ENCODE measurements at regions of chr1 and their contacts with region 1.

Region 1: GRCh38 chr1:169044971-169045370 is 61.5 kb upstream of the ATP1B1 start:
- DNase-seq: no peak
- ATAC-seq: no peak
- H3K4me3 Mint-ChIP-seq: no peak overlapping the region
- H3K27ac Mint-ChIP-seq: peak overlapping the region; percentile 30
- H3K4me1 Mint-ChIP-seq: peaks cover 67% of the 10 kb centered on the region
- H3K27me3 Mint-ChIP-seq: no peaks in the 10 kb centered on the region

Region 2: DNA sequence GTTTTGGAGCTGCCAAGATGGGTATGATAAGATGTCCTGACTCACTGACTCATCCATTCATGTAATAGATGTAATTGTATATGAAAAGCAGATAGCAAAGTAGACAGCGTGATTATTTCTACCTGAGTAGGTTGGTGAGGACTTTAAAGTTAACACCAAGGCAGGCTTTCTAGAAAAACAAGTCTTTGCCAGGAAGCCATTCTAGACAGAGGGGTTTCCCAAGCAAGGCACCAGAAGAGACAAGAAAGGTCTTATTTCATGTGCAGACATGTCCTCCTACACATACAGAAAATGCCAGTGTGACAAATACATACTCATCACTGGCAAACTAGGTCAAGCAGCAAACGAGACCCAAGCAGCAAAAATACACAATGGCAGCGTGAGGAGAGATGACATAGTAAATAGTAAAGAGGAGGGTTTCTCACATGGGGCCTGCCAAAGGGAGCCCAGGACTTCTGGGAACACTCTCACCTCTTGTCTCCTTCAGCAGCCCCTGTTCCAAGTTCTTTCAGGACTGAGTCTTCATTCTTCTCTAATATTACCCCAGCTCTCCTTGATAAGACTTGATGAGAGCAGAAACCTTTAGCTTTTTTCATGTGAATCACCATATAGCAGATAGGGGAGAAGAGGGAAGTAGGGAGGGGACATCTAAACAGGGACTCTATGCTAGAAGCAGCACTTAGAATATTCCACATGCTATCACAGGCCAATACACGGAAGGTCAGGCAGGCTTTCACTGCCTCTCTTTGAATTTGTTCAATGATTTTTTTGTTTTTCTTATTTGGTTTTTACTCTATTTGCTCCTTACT is 53.1 kb before region 1 on chr1:
- CTCF ChIA-PET with region 1: interaction called, 3 read pairs
- POLR2A ChIA-PET with region 1: no interaction called
- intact Hi-C with region 1: loop called in 1 of 2 experiments (anchors 2 kb)
- DNase-seq: peak; percentile 41
- ATAC-seq: peak; percentile 95
- H3K4me3 Mint-ChIP-seq: no peak overlapping the region
- H3K27ac Mint-ChIP-seq: peak overlapping the region; percentile 81
- H3K4me1 Mint-ChIP-seq: peaks cover 18% of the 10 kb centered on the region
- H3K27me3 Mint-ChIP-seq: peaks cover 3% of the 10 kb centered on the region

Region 3: DNA sequence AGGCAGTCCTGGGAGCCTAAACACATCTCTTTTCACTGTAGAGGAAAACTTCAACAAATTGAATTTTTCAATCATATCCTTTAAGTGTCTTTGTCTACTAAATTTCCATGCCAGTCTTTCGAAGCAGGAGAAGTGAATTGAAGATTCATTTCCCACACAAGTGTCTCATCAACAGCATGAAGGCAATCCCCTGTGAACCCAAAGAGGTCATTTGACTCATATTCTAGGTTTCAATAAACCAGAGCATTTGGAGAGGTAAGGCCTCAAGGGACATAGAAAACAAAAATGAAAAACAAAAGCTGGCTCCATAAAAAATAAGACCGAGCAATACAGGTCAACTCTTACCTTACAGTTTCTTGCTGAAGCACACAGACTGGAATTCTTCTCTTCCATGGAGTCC is 32.6 kb before region 1 on chr1:
- CTCF ChIA-PET with region 1: no interaction called
- POLR2A ChIA-PET with region 1: no interaction called
- intact Hi-C with region 1: loop called in 1 of 2 experiments (anchors 1 kb)
- DNase-seq: no peak
- ATAC-seq: peak; percentile 91
- H3K4me3 Mint-ChIP-seq: no peak overlapping the region
- H3K27ac Mint-ChIP-seq: peak overlapping the region; percentile 33
- H3K4me1 Mint-ChIP-seq: peaks cover 13% of the 10 kb centered on the region
- H3K27me3 Mint-ChIP-seq: no peaks in the 10 kb centered on the region

Region 4: GRCh38 chr1:169106095-169106920 is 61.3 kb after region 1 on chr1 and contains the start of gene ATP1B1:
- CTCF ChIA-PET with region 1: interaction called, 3 read pairs
- POLR2A ChIA-PET with region 1: interaction called, 3 read pairs
- intact Hi-C with region 1: loop called (anchors 2 to 5 kb)
- DNase-seq: peak; percentile 88
- ATAC-seq: peak; percentile 91
- H3K4me3 Mint-ChIP-seq: peak within 1 kb of the TSS; percentile 78
- H3K27ac Mint-ChIP-seq: peak within 1 kb of the TSS; percentile 63
- H3K4me1 Mint-ChIP-seq: peaks cover 41% of the 10 kb centered on the region
- H3K27me3 Mint-ChIP-seq: peaks cover 18% of the 10 kb centered on the region
- total RNA-seq, gene ATP1B1: 2.9 to 3.3 TPM

Region 5: DNA sequence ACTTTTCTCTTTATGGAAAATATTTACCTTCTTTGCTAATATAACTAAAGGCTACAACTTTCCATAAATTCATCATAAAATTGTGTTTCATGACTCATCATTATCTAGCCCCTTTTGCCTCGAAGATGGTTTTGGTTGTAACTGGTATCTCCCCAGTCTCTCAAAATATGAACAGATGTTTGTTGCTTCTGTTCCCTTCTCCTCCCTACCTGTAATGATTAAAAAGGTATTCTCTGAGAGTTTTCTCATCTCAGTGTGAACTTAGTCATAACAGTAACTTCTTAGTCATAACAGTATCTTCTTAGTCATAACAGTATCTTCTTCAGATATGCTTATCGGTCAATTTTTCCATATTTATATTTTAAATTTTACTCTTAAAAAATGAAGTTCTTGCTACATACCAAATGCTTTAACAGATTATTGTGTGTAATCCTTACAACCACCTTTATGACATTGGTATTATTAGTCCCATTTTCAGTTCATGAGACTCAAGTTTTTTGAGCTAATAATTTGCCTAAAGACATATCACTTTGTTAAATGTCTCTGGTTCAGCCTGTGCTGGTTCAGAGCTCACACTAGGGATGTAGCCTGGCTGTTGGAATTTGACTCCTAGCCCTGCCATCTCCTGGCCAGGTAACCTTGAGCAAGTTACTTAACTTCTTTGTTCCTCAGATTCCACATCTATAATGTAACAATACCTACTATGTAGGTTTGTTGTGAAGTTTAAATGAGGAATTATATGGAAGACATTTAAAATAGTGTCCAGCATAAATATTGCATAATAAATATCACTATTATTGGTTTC is 94.1 kb after region 1 on chr1:
- CTCF ChIA-PET with region 1: no interaction called
- POLR2A ChIA-PET with region 1: interaction called, 4 read pairs
- intact Hi-C with region 1: loop called in 1 of 2 experiments (anchors 1 kb)
- DNase-seq: no peak
- ATAC-seq: peak; percentile 95
- H3K4me3 Mint-ChIP-seq: no peak overlapping the region
- H3K27ac Mint-ChIP-seq: no peak overlapping the region
- H3K4me1 Mint-ChIP-seq: peaks cover 12% of the 10 kb centered on the region
- H3K27me3 Mint-ChIP-seq: no peaks in the 10 kb centered on the region

Measured in activated CD4-positive, alpha-beta T cell treated with anti-CD3 and anti-CD28 coated beads for 36 hours (primary cell).